HEK293T (cell line): ENCODE measurements at regions of chr6 and their contacts with region 1.

Region 1: GRCh38 chr6:27893059-27893835 is 18.9 kb downstream of the OR2B2 start:
- DNase-seq: peak; percentile 86

Region 2: GRCh38 chr6:26122793-26123674 is 1770.2 kb before region 1 on chr6:
- CTCF ChIA-PET with region 1: no interaction called
- POLR2A ChIA-PET with region 1: interaction called, 11 read pairs
- DNase-seq: peak; percentile 71

Region 3: DNA sequence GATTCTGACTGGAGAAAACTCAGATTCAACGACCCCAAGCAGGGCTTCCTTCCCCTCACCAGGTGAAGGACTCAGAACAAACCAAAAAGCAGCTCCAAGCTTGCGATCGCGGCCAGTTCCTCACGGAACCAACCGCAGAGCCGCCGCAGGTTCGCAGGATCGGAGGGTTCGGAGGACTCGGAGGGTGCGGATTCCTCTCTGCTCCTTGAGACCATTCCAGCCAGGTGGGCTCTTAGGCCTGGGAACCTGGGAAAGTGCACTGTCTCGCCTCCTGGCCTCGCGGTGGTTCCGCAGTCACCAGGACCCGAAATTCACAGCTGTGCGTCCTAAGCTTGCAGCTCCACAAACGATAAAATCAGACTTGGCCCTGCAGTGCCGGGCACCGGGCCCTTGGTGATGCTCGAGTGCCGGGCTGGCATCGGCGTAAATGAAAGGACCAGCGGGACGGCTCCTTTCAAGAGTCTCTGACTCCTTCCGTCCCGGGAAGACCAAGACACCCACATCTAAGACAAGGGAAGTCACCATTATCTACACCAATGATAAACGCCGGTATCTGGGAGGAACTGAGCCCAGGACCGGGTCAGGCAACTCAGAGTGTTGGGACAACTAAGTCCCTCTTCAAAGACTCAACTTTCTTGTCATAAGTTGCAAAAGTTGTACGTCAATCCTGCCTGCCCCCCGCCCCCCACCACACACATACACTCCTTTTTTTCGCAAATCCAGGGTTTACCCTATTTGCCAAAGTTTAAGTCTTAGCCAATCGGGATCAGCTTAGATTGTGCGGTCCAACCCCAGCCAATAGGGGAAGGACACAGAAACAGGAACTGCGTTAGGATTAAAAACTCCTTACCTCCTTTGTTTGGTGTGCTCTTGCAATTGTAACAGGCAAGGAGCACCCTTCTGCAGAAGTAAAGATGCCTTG is 715.5 kb before region 1 on chr6:
- CTCF ChIA-PET with region 1: no interaction called
- POLR2A ChIA-PET with region 1: interaction called, 11 read pairs
- DNase-seq: peak; percentile 74

Region 4: DNA sequence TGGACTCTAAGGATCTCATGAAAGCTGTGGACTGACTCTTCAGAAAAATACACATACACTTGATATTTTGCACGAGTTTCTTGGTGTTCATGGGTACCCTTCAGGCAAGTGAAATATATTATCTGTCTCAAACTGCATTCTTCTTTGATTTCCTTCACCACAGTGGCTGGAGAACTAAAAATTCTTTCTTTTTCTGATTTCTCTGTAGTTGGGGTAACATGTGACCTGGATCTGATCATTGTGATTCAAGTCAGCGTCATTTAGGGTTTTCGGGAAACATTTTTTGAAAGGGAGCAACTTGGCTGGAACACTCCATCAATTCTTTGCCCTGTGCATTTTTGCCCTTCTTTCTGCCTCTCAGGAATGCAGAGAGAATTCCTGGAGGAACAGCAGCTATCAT is 186.8 kb before region 1 on chr6:
- CTCF ChIA-PET with region 1: no interaction called
- POLR2A ChIA-PET with region 1: no interaction called
- DNase-seq: no peak

Region 5: DNA sequence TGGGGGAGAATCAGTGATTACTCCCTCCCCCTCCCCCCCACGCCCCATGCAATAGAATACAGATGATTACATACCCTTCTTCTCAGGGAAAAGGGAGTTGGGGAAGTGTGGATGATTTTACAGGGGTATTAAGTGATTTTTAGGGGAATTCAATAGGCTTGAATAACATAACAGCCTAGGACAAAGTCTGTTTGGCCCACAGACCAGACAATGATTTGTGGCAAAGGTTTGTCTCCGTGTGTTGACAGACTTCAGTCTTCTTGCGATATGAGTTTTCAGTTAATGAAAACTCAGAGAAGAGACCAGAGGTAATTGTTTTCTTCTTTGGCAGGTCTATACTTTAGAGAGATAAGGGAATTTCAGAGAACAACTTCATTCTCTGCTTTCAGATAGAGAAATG is 76.3 kb before region 1 on chr6:
- CTCF ChIA-PET with region 1: no interaction called
- POLR2A ChIA-PET with region 1: interaction called, 323 read pairs
- DNase-seq: no peak

Region 6: GRCh38 chr6:27864906-27865849 is 28.1 kb before region 1 on chr6:
- CTCF ChIA-PET with region 1: interaction called, 4 read pairs
- POLR2A ChIA-PET with region 1: interaction called, 321 read pairs
- DNase-seq: peak; percentile 80

Region 7: DNA sequence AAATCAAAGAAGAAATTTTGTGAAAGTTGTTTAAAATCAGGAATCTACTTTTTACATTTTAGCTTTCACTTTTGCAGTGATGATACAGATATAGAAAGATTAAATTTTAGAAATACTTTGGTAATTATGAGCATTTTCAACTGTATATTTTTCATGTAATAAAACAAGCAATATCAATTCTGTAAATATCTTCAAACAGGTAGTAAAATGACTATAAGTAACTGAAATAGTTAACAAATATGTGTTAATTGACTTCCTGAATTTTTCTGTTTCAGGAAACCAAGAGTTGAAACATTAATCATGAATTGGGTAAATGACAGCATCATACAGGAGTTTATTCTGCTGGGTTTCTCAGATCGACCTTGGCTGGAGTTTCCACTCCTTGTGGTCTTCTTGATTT is 63.7 kb after region 1 on chr6 and contains the start of gene OR2B6:
- CTCF ChIA-PET with region 1: no interaction called
- POLR2A ChIA-PET with region 1: no interaction called
- DNase-seq: no peak